ENCODE measurements at regions of chr17 and their contacts with region 1.

Region 1: DNA sequence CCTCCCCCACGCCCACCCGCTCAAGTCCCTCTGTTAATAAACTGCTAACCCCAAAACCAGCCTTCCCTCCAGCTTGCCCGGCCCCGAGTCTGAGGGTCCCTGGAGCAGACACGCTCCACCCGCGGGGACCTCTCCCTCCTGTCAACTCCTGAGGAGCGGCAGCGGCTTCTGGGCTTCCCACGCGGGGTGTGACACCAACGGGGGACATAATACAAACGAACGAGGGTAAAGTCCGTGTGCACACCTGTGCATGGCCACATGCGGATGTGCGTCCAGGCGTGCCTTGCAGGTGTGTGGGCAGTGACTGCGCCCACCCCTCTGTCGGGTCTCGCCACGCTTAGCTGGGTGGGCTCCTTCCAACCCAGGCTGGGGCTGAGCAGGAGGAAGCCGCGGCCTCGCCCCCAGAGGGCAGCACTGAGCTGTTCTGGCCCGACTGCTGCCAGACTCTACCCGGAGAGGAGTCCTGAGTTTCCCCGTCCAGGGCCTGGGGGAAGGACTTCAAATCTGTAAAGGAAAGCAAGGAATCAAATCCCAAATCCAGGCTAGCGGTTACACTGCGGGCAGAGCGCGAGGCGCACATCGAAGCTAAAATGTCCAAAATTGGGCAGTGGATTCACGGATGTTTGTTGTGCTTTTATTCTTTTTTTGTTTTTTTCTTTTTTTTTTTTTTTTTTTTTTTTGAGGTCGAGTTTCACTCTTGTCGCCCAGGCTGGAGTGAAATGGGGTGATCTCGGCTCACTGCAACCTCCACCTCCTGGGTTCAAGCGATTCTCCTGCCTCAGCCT is 24.2 kb upstream of the KRT17 start:
- DNase-seq: peak; percentile 89 to 94
- H3K4me3 ChIP-seq: peak overlapping the region; percentile 47
- H3K4me3 Mint-ChIP-seq: peak overlapping the region; percentile 81
- H3K27ac Mint-ChIP-seq: peak overlapping the region; percentile 36
- H3K4me1 ChIP-seq: peaks cover 35% of the 10 kb centered on the region
- H3K4me1 Mint-ChIP-seq: peaks cover 7% of the 10 kb centered on the region
- H3K27me3 ChIP-seq: no peaks in the 10 kb centered on the region
- H3K27me3 Mint-ChIP-seq: no peaks in the 10 kb centered on the region
- CTCF ChIP-seq: peak; percentile 95 to 96

Region 2: DNA sequence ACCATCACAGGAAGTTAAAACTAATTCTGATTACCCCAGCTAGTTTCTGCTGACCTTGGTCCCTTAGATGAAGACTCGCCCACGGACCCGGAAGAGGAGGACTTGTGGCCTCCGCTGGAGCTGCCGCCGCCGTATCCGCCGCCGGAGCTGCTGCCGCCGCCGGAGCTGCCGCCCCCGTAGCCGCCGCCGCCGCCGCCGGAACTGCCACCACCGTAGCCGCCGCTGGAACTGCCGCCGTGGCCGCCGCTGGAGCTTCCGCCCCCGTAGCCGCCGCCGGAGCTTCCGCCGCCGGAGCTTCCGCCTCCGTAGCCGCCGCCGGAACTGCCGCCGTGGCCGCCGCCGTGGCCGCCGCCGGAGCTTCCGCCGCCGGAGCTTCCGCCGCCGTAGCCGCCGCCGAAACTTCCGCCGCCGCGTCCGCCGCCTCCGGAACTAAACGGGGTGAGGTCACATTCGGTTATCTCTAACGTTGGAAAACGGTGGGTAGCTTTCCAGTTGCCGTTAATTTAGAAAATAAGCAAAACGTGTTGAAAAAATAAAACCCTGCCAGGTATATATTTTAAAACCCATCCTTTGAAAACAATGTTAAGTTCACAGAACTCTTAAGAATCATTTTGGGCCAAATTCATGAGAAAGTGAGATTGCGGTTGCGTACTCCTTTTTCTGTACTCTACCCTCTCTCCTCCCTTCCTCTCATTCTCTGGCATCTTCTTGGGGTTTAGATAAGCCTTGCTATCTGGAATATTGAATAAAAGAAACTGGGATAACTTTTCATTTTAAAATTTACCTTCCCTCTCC is 829.7 kb before region 1 on chr17:
- CTCF ChIA-PET with region 1: interaction called, 10 read pairs
- POLR2A ChIA-PET with region 1: interaction called, 4 read pairs
- intact Hi-C with region 1: no loop called
- DNase-seq: peak; percentile 85 to 88
- H3K4me3 ChIP-seq: peak overlapping the region; percentile 67
- H3K4me3 Mint-ChIP-seq: peak overlapping the region; percentile 83
- H3K27ac Mint-ChIP-seq: peak overlapping the region; percentile 76
- H3K4me1 ChIP-seq: peaks cover 8% of the 10 kb centered on the region
- H3K4me1 Mint-ChIP-seq: peaks cover 8% of the 10 kb centered on the region
- H3K27me3 ChIP-seq: no peaks in the 10 kb centered on the region
- H3K27me3 Mint-ChIP-seq: no peaks in the 10 kb centered on the region
- CTCF ChIP-seq: no peak

Region 3: DNA sequence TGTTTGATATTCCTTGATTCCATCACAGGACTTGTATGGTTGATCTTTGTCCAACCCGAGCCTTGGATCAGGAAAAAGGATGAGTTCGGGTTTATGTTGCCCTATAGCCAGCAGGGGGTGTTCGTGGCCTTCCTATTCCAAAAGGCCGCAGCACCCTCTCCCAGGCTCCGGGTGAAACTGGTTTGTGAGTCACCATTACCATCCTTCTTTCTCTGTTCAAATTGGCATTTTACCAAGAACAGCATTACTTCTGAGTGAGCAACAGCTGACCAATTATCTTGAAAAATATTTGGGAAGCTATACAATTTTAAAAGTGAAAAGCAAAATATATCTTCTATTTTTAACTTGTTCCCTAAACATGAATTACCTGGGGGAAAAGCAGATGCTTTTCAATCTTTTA is 739.3 kb before region 1 on chr17:
- CTCF ChIA-PET with region 1: no interaction called
- POLR2A ChIA-PET with region 1: no interaction called
- intact Hi-C with region 1: loop called (anchors 1 kb)
- DNase-seq: peak; percentile 89
- H3K4me3 ChIP-seq: no peak overlapping the region
- H3K4me3 Mint-ChIP-seq: no peak overlapping the region
- H3K27ac Mint-ChIP-seq: peak overlapping the region; percentile 87
- H3K4me1 ChIP-seq: peaks cover 32% of the 10 kb centered on the region
- H3K4me1 Mint-ChIP-seq: peaks cover 36% of the 10 kb centered on the region
- H3K27me3 ChIP-seq: no peaks in the 10 kb centered on the region
- H3K27me3 Mint-ChIP-seq: no peaks in the 10 kb centered on the region
- CTCF ChIP-seq: peak; percentile 78 to 87

Region 4: GRCh38 chr17:41417576-41418015 is 231.0 kb before region 1 on chr17:
- CTCF ChIA-PET with region 1: interaction called, 11 read pairs
- POLR2A ChIA-PET with region 1: no interaction called
- intact Hi-C with region 1: no loop called
- DNase-seq: peak; percentile 63 to 65
- H3K4me3 ChIP-seq: no peak overlapping the region
- H3K4me3 Mint-ChIP-seq: no peak overlapping the region
- H3K27ac Mint-ChIP-seq: peak overlapping the region; percentile 5
- H3K4me1 ChIP-seq: peaks cover 60% of the 10 kb centered on the region
- H3K4me1 Mint-ChIP-seq: peaks cover 70% of the 10 kb centered on the region
- H3K27me3 ChIP-seq: no peaks in the 10 kb centered on the region
- H3K27me3 Mint-ChIP-seq: no peaks in the 10 kb centered on the region
- CTCF ChIP-seq: peak; percentile 70 to 71

Region 5: GRCh38 chr17:41530062-41531051 is 118.2 kb before region 1 on chr17:
- CTCF ChIA-PET with region 1: interaction called, 16 read pairs
- POLR2A ChIA-PET with region 1: interaction called, 25 read pairs
- intact Hi-C with region 1: no loop called
- DNase-seq: peak; percentile 89 to 97
- H3K4me3 ChIP-seq: peak overlapping the region; percentile 4
- H3K4me3 Mint-ChIP-seq: peak overlapping the region; percentile 99
- H3K27ac Mint-ChIP-seq: peak overlapping the region; percentile 98
- H3K4me1 ChIP-seq: peaks cover 46% of the 10 kb centered on the region
- H3K4me1 Mint-ChIP-seq: peaks cover 54% of the 10 kb centered on the region
- H3K27me3 ChIP-seq: no peaks in the 10 kb centered on the region
- H3K27me3 Mint-ChIP-seq: no peaks in the 10 kb centered on the region
- CTCF ChIP-seq: no peak

Region 6: GRCh38 chr17:41659427-41660212 is 11.0 kb after region 1 on chr17:
- CTCF ChIA-PET with region 1: interaction called, 147 read pairs
- POLR2A ChIA-PET with region 1: interaction called, 6 read pairs
- intact Hi-C with region 1: loop called (anchors 1 kb)
- DNase-seq: no peak
- H3K4me3 ChIP-seq: no peak overlapping the region
- H3K4me3 Mint-ChIP-seq: no peak overlapping the region
- H3K27ac Mint-ChIP-seq: no peak overlapping the region
- H3K4me1 ChIP-seq: peaks cover 11% of the 10 kb centered on the region
- H3K4me1 Mint-ChIP-seq: no peaks in the 10 kb centered on the region
- H3K27me3 ChIP-seq: no peaks in the 10 kb centered on the region
- H3K27me3 Mint-ChIP-seq: no peaks in the 10 kb centered on the region
- CTCF ChIP-seq: no peak

Measured in Caco-2 (cell line).